ENCODE measurements at regions of chr6 and their contacts with region 1.

Region 1: GRCh38 chr6:45209762-45210161 is 118.4 kb upstream of the RUNX2 start:
- DNase-seq: no peak
- H3K4me3 Mint-ChIP-seq: no peak overlapping the region
- H3K27ac Mint-ChIP-seq: no peak overlapping the region
- H3K4me1 Mint-ChIP-seq: peaks cover 28% of the 10 kb centered on the region
- H3K27me3 Mint-ChIP-seq: no peaks in the 10 kb centered on the region

Region 2: DNA sequence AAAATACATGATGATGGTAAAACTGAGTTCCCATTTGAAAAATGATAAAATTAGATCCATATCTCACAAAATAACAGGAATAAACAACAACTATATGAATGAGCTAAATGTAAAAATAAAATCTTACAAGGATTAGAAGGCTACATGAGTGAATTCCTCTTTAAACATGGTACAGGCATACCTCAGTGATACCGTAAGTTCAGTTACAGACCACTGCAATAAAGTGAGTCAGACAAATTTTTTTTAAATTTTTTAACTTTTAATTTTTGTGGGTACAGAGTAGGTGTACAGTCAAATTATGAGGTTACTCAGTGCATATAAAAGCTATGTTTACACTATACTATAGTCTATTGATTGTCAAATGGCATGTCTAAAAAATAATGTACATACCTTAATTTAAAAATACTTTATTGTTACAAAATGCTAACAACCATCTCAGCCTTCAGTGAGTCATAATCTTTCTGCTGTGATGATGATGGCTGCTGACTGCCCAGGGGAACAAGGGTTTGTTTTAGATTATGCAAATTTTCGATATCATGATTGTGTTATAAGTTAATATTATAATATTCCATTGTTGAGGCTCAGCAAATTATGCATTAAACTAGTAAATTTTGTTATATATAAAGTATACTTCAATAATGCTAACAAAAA is 104.5 kb before region 1 on chr6:
- intact Hi-C with region 1: no loop called
- DNase-seq: no peak
- H3K4me3 Mint-ChIP-seq: no peak overlapping the region
- H3K27ac Mint-ChIP-seq: no peak overlapping the region
- H3K4me1 Mint-ChIP-seq: peaks cover 11% of the 10 kb centered on the region
- H3K27me3 Mint-ChIP-seq: no peaks in the 10 kb centered on the region

Region 3: DNA sequence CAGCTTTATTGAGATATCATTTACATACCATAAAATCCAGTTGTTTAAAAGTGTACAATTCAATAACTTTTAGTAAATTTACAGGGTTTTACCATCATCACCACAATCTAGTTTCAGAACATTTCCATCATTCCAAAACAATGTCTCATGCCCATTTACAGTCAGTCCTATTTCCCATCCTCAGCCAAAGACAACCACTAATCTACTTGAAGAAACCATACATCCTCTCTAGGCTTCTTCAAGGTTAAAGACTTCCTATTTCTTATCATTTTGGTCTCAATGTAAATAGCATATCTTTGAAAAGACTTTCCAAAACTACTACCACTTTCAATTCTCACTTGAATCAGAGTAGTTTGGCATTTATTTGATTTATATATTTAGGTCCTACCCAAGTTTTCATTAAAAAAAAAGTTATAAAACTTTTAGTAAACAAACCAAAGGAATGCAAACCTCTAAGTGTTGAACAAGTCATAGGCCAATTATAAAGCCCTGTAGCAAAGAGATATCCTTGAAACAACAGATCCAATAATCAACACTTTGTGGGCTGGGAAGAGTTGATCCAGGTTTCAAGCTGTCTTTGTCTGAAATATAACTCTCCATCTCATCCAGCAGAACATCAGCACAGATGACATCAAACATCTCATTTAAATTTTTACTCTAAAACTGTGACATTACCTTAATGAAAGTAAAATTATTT is 92.9 kb before region 1 on chr6:
- intact Hi-C with region 1: loop called (anchors 5 kb)
- DNase-seq: no peak
- H3K4me3 Mint-ChIP-seq: peak overlapping the region; percentile 2
- H3K27ac Mint-ChIP-seq: peak overlapping the region; percentile 17
- H3K4me1 Mint-ChIP-seq: peaks cover 18% of the 10 kb centered on the region
- H3K27me3 Mint-ChIP-seq: no peaks in the 10 kb centered on the region